Breast epithelium (tissue), 4 donors: ENCODE measurements at regions of chr9 and their contacts with region 1.

Region 1: DNA sequence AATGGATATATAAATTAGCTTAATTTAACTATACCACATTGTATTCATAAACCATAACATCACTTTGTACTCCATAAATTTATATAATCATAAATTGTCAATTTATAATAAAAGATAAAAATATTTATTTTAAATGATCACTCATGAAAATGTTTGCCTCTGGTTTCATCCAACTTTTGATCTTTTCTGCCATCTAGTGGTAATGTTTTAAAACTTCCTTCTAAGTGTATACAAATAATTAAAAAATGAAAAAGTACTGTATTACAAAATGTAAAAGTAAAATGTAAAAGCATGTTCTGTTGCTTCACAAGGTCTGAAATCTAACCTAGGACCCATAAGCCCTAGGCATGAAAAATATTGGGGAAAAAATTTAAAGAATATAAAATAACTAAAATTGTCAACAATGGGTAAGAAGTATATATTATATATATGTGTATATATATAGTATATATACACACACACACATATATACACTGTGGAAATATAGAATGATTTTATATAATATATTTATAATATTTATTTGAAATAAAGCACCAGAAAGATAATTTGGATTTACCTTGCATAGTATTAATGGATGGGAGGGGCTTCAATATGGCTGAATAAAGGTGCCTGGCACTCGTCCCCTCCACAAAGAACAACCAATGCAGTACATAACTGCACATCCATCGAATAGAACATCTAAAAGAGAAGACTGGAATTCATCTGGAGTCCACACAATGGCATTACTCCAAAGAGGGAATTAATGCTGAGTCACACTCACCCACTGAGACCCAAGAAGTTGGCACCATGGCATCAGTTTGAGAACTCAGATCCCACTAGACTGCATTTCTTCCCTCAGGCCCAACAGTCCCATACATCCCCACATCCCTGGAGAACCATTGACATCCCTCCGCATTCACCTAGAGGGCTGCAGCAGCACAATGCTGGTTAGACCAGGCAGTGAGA is 32.5 kb downstream of the ANXA1 start:
- DNase-seq: no peak
- H3K4me3 ChIP-seq: no peak overlapping the region
- H3K27ac ChIP-seq: no peak overlapping the region
- H3K4me1 ChIP-seq: no peaks in the 10 kb centered on the region
- H3K27me3 ChIP-seq: no peaks in the 10 kb centered on the region
- CTCF ChIP-seq: peak; percentile 27 to 60 (median 42)
- POLR2A ChIP-seq: no peak

Region 2: GRCh38 chr9:72013292-72013760 is 1170.9 kb before region 1 on chr9:
- intact Hi-C with region 1: loop called (anchors 5 kb)
- DNase-seq: no peak
- H3K4me3 ChIP-seq: no peak overlapping the region
- H3K27ac ChIP-seq: no peak overlapping the region
- H3K4me1 ChIP-seq: no peaks in the 10 kb centered on the region
- H3K27me3 ChIP-seq: no peaks in the 10 kb centered on the region
- CTCF ChIP-seq: no peak
- POLR2A ChIP-seq: no peak

Region 3: GRCh38 chr9:72871685-72872084 is 312.5 kb before region 1 on chr9:
- intact Hi-C with region 1: no loop called
- DNase-seq: no peak
- H3K4me3 ChIP-seq: no peak overlapping the region
- H3K27ac ChIP-seq: no peak overlapping the region
- H3K4me1 ChIP-seq: no peaks in the 10 kb centered on the region
- H3K27me3 ChIP-seq: no peaks in the 10 kb centered on the region
- CTCF ChIP-seq: peak; percentile 39 to 47 (median 42)
- POLR2A ChIP-seq: no peak

Region 4: DNA sequence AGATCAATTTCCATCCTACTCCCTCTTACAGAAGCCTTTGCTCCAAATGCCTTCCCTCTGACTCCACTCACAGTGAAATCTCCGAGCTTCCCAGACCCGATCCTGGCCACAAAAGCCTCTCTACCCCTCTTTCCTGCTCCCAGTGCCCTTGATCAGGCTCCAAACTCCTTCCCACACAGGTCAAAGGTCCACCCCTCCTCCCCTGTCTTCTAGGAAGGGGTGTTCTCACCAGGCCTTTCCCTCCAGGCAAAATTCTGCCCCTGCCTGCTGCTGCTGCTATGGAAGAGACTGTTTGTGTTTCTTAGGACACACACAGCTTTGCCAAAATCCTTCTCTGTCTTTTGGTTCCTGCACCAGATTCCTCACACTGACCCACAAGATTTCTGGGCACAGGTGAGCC is 145.6 kb before region 1 on chr9:
- intact Hi-C with region 1: no loop called
- DNase-seq: peak in 1 of 2 donors; percentile 72
- H3K4me3 ChIP-seq: peak overlapping the region in 2 of 3 donors; percentile 3 to 30
- H3K27ac ChIP-seq: peak overlapping the region; percentile 76 to 86
- H3K4me1 ChIP-seq: no peaks in the 10 kb centered on the region
- H3K27me3 ChIP-seq: no peaks in the 10 kb centered on the region
- CTCF ChIP-seq: no peak
- POLR2A ChIP-seq: no peak

Region 5: DNA sequence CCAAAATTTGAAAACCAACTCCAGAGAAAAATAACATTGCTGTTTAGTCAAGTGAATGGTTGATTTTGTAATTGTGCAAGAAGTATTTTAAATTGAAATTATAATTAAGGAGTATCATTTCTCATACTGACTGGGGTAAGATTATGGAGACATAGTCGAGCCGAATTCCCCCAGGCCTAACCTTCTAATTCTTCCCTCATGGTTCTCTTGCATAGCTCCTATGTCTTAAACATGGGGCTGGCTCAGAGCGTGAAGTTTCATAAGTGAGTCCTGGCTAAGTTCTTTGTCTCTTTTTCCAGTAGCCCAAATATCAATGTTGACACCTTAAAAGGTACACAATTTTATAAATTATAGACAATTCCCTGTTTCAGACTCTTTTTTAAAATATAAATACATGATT is 79.3 kb before region 1 on chr9:
- intact Hi-C with region 1: loop called (anchors 5 kb)
- DNase-seq: no peak
- H3K4me3 ChIP-seq: no peak overlapping the region
- H3K27ac ChIP-seq: no peak overlapping the region
- H3K4me1 ChIP-seq: no peaks in the 10 kb centered on the region
- H3K27me3 ChIP-seq: no peaks in the 10 kb centered on the region
- CTCF ChIP-seq: no peak
- POLR2A ChIP-seq: no peak